ENCODE measurements at regions of chr16 and their contacts with region 1.

Region 1: GRCh38 chr16:3879887-3880564 is 487 bp downstream of the CREBBP start:
- DNase-seq: peak; percentile 79 to 93
- H3K4me3 ChIP-seq: peak overlapping the region; percentile 90 to 98 (median 95)
- H3K27ac ChIP-seq: peak overlapping the region; percentile 71 to 95 (median 87)
- H3K4me1 ChIP-seq: peaks cover 40 to 50% (median 48%) of the 10 kb centered on the region in 4 donors
- H3K27me3 ChIP-seq: no peaks in the 10 kb centered on the region
- CTCF ChIP-seq: peak in 1 of 7 experiments; percentile 30
- EP300 ChIP-seq: no peak
- POLR2A ChIP-seq: no peak

Region 2: GRCh38 chr16:3690470-3690928 is 189.5 kb before region 1 on chr16:
- intact Hi-C with region 1: loop called (anchors 10 kb)
- DNase-seq: peak; percentile 90 to 96
- H3K4me3 ChIP-seq: peak overlapping the region; percentile 25 to 38 (median 30)
- H3K27ac ChIP-seq: peak overlapping the region in 3 of 5 donors; percentile 56 to 71 (median 70)
- H3K4me1 ChIP-seq: peaks cover 0 to 19% (median 15%) of the 10 kb centered on the region in 4 donors
- H3K27me3 ChIP-seq: no peaks in the 10 kb centered on the region
- CTCF ChIP-seq: peak in 5 of 7 experiments; percentile 89 to 95 (median 91)
- EP300 ChIP-seq: no peak
- POLR2A ChIP-seq: no peak